ENCODE measurements at regions of chr11 and their contacts with region 1.

Region 1: GRCh38 chr11:66328307-66329144 is 7.7 kb downstream of the RIN1 start:
- DNase-seq: peak; percentile 65 to 92 (median 81)
- ATAC-seq: peak; percentile 83
- H3K4me3 ChIP-seq: peak overlapping the region; percentile 12
- H3K4me3 Mint-ChIP-seq: peak overlapping the region; percentile 67
- H3K27ac ChIP-seq: peak overlapping the region in 1 of 2 experiments; percentile 57
- H3K27ac Mint-ChIP-seq: peak overlapping the region; percentile 89
- H3K4me1 ChIP-seq: peaks cover 45% of the 10 kb centered on the region
- H3K4me1 Mint-ChIP-seq: peaks cover 39% of the 10 kb centered on the region
- H3K27me3 ChIP-seq: no peaks in the 10 kb centered on the region
- H3K27me3 Mint-ChIP-seq: no peaks in the 10 kb centered on the region
- CTCF ChIP-seq: peak; percentile 92

Region 2: GRCh38 chr11:66268283-66268951 is 60.1 kb before region 1 on chr11 and contains the start of gene RAB1B:
- CTCF ChIA-PET with region 1: no interaction called
- POLR2A ChIA-PET with region 1: no interaction called
- intact Hi-C with region 1: no loop called
- DNase-seq: peak; percentile 99 to 100 (median 100)
- ATAC-seq: peak; percentile 75
- H3K4me3 ChIP-seq: peak within 1 kb of the TSS; percentile 89 to 97
- H3K4me3 Mint-ChIP-seq: peak within 1 kb of the TSS; percentile 97
- H3K27ac ChIP-seq: peak within 1 kb of the TSS; percentile 83 to 91
- H3K27ac Mint-ChIP-seq: peak within 1 kb of the TSS; percentile 97
- H3K4me1 ChIP-seq: peaks cover 43% of the 10 kb centered on the region
- H3K4me1 Mint-ChIP-seq: peaks cover 50% of the 10 kb centered on the region
- H3K27me3 ChIP-seq: no peaks in the 10 kb centered on the region
- H3K27me3 Mint-ChIP-seq: no peaks in the 10 kb centered on the region
- CTCF ChIP-seq: no peak
- total RNA-seq, gene RAB1B: 34.4 to 36.3 TPM

Region 3: GRCh38 chr11:66317723-66318599 is 10.6 kb before region 1 on chr11:
- CTCF ChIA-PET with region 1: interaction called, 140 read pairs
- POLR2A ChIA-PET with region 1: interaction called, 27 read pairs
- intact Hi-C with region 1: no loop called
- DNase-seq: peak; percentile 67 to 98 (median 86)
- ATAC-seq: peak; percentile 85
- H3K4me3 ChIP-seq: peak overlapping the region; percentile 33 to 74
- H3K4me3 Mint-ChIP-seq: peak overlapping the region; percentile 87
- H3K27ac ChIP-seq: peak overlapping the region; percentile 92 to 98
- H3K27ac Mint-ChIP-seq: peak overlapping the region; percentile 99
- H3K4me1 ChIP-seq: peaks cover 38% of the 10 kb centered on the region
- H3K4me1 Mint-ChIP-seq: peaks cover 55% of the 10 kb centered on the region
- H3K27me3 ChIP-seq: no peaks in the 10 kb centered on the region
- H3K27me3 Mint-ChIP-seq: no peaks in the 10 kb centered on the region
- CTCF ChIP-seq: no peak

Region 4: GRCh38 chr11:67428052-67428914 is 1099.8 kb after region 1 on chr11 and contains the start of gene RPS6KB2:
- CTCF ChIA-PET with region 1: no interaction called
- POLR2A ChIA-PET with region 1: no interaction called
- intact Hi-C with region 1: no loop called
- DNase-seq: peak; percentile 97 to 100 (median 98)
- ATAC-seq: peak; percentile 89
- H3K4me3 ChIP-seq: peak within 1 kb of the TSS; percentile 67 to 73
- H3K4me3 Mint-ChIP-seq: peak within 1 kb of the TSS; percentile 99
- H3K27ac ChIP-seq: peak within 1 kb of the TSS; percentile 86 to 87
- H3K27ac Mint-ChIP-seq: peak within 1 kb of the TSS; percentile 95
- H3K4me1 ChIP-seq: peaks cover 34% of the 10 kb centered on the region
- H3K4me1 Mint-ChIP-seq: peaks cover 41% of the 10 kb centered on the region
- H3K27me3 ChIP-seq: no peaks in the 10 kb centered on the region
- H3K27me3 Mint-ChIP-seq: no peaks in the 10 kb centered on the region
- CTCF ChIP-seq: no peak
- total RNA-seq, gene RPS6KB2: 71.8 to 76.2 TPM

Measured in CD8-positive, alpha-beta T cell (primary cell).